Tibial artery (tissue), 4 donors: ENCODE measurements at regions of chr17 and their contacts with region 1.

Region 1: GRCh38 chr17:44070455-44071197 is at the start of gene G6PC3:
- DNase-seq: peak; percentile 96 to 98
- H3K4me3 ChIP-seq: peak within 1 kb of the TSS; percentile 58 to 68
- H3K27ac ChIP-seq: peak within 1 kb of the TSS; percentile 79 to 88
- H3K4me1 ChIP-seq: peaks cover 4 to 43% (median 27%) of the 10 kb centered on the region in 4 donors
- H3K27me3 ChIP-seq: no peaks in the 10 kb centered on the region
- CTCF ChIP-seq: peak; percentile 12 to 36

Region 2: DNA sequence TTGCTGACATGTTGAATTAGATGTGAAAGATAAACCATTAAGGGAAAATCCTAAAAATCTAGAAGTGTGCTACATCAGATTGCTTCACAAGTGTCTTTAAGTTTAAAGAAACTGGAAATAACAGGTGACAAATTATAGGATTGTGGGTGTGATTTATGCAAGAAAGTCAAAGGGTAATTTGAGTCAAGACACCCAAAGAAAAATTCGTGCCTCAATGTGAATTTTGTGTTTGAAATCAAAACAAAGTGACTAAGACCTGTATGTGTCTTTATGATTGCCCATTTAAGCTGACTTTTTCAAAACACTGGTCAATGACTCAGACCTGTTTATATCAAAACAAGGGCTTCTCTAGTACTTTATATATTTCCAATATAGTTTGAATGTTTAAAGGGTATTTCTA is 111.7 kb before region 1 on chr17:
- intact Hi-C with region 1: no loop called
- DNase-seq: no peak
- H3K4me3 ChIP-seq: no peak overlapping the region
- H3K27ac ChIP-seq: no peak overlapping the region
- H3K4me1 ChIP-seq: no peaks in the 10 kb centered on the region
- H3K27me3 ChIP-seq: peaks cover 0 to 53% of the 10 kb centered on the region in 2 donors
- CTCF ChIP-seq: no peak

Region 3: GRCh38 chr17:44014437-44015172 is 56.0 kb before region 1 on chr17 and contains the start of gene TMEM101:
- intact Hi-C with region 1: loop called (anchors 5 kb)
- DNase-seq: peak; percentile 91 to 92
- H3K4me3 ChIP-seq: peak within 1 kb of the TSS; percentile 74 to 76
- H3K27ac ChIP-seq: peak within 1 kb of the TSS; percentile 68 to 77
- H3K4me1 ChIP-seq: peaks cover 0 to 21% (median 12%) of the 10 kb centered on the region in 4 donors
- H3K27me3 ChIP-seq: no peaks in the 10 kb centered on the region
- CTCF ChIP-seq: no peak

Region 4: DNA sequence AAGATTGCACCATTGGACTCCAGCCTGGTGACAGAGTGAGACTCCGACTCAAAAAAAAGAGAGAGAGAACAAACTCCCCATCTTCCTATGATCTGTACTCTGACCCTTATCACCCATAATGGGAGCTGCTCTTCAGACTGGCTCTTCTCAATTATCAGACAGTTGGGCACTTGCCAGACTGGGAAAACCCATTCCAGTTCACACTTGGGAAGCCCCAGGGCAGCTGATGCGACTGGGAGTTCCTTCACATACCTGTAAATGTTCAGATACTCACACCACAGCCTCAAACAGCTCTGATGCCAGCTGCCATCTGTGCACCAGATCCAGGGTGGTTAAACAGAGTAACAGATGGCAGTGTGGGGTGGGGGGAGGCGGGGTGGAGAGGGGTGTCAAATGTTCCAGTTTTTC is 32.0 kb before region 1 on chr17:
- intact Hi-C with region 1: no loop called
- DNase-seq: no peak
- H3K4me3 ChIP-seq: no peak overlapping the region
- H3K27ac ChIP-seq: no peak overlapping the region
- H3K4me1 ChIP-seq: peaks cover 0 to 23% (median 17%) of the 10 kb centered on the region in 4 donors
- H3K27me3 ChIP-seq: no peaks in the 10 kb centered on the region
- CTCF ChIP-seq: no peak

Region 5: DNA sequence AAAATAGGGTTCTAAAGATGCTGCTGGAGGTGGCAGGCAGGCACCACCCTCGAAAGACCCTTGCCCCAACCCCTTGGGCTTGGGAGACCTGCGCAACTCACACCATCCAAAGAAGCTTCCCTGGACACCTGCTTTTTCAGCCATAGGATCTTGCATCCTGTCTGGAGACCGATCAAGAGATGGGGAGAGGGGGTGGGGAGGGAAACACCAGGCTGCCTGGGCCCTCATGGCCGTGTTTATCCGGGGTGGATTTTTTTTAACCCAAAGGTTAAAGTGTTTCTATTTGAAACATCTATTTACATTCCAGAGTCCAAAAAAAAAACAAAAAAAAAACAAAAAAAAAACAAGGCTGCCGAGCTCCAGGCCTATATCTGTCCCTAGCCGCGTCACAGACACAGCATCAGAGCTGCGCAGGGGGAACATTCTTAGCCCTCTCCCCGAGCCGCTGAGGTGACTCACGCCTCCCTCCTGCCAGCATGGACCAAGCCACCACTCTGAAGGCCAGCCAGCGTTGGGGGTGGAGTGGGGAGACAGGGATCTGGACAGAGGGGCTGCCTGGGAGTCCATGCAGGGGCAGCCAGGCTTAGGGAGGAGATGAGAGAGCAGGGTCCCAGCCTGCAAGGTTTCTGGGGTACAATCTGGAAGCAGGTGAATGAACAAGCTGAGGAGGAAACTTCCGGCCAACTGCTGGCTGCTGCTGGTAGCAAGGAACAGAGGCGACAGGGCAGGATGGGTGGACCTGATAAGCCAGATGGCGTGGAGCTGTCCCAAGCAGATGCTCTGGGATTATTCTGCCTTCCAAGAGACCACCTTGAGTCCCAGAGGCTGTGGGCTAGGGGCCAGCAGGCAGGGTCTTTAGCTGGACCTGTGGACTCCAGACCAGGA is 38.1 kb after region 1 on chr17:
- intact Hi-C with region 1: loop called (anchors 5 kb)
- DNase-seq: peak; percentile 94 to 97
- H3K4me3 ChIP-seq: peak overlapping the region; percentile 53 to 56
- H3K27ac ChIP-seq: peak overlapping the region; percentile 84 to 91
- H3K4me1 ChIP-seq: peaks cover 22 to 96% (median 89%) of the 10 kb centered on the region in 4 donors
- H3K27me3 ChIP-seq: no peaks in the 10 kb centered on the region
- CTCF ChIP-seq: no peak

Region 6: GRCh38 chr17:44123356-44124117 is 52.9 kb after region 1 on chr17 and contains the start of gene HDAC5:
- intact Hi-C with region 1: loop called (anchors 5 kb)
- DNase-seq: peak; percentile 96 to 97
- H3K4me3 ChIP-seq: peak within 1 kb of the TSS; percentile 99 to 100
- H3K27ac ChIP-seq: peak within 1 kb of the TSS; percentile 98 to 99
- H3K4me1 ChIP-seq: peaks cover 0 to 50% (median 46%) of the 10 kb centered on the region in 4 donors
- H3K27me3 ChIP-seq: no peaks in the 10 kb centered on the region
- CTCF ChIP-seq: peak; percentile 58 to 61